ENCODE measurements at regions of chr5 and their contacts with region 1.

Region 1: DNA sequence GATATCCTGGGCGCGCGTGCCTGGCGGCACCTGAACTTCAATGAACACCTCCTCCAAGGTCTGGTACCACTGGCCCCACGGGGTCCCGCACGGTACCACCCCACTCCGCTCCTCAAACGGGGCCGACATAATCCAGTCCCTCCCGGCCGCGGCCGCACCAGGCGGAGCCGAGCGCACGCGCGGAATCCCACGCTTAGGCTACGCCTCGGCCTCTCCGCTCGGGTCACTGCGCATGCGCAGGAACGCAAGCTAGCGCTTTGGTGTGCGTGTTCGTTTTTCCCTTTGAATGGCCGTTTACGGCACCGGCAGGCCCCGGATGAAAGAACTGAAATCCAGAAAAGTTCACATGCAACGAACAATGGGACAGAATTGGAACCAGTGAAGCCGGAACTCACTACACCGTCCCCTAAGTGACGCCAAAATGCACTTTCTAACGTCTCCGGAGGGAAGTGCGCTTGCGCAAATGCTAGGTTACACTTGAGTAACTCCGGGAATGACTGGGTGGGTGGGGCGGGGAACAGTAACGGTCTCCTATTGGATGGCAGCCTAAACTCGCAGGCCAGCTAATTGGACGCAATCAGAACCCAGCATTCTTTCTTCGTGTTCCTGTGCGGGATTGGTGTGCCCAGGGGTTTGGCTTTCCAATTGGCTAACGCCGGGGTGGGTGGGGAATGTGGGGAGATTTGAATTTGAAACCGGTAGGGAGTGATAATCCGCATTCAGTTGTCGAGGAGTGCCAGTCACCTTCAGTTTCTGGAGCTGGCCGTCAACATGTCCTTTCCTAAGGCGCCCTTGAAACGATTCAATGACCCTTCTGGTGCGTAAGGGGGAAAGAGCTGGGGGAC is at the starts of genes HMMR and NUDCD2:
- DNase-seq: peak; percentile 97
- ATAC-seq: peak; percentile 88
- H3K4me3 Mint-ChIP-seq: peak within 1 kb of the TSS; percentile 88
- H3K27ac Mint-ChIP-seq: peak within 1 kb of the TSS; percentile 100
- H3K4me1 Mint-ChIP-seq: peaks cover 34% of the 10 kb centered on the region
- H3K27me3 Mint-ChIP-seq: no peaks in the 10 kb centered on the region
- CTCF ChIP-seq: peak; percentile 14
- total RNA-seq, gene HMMR: 94.2 to 95.2 TPM
- total RNA-seq, gene NUDCD2: 55.5 to 62.7 TPM

Region 2: DNA sequence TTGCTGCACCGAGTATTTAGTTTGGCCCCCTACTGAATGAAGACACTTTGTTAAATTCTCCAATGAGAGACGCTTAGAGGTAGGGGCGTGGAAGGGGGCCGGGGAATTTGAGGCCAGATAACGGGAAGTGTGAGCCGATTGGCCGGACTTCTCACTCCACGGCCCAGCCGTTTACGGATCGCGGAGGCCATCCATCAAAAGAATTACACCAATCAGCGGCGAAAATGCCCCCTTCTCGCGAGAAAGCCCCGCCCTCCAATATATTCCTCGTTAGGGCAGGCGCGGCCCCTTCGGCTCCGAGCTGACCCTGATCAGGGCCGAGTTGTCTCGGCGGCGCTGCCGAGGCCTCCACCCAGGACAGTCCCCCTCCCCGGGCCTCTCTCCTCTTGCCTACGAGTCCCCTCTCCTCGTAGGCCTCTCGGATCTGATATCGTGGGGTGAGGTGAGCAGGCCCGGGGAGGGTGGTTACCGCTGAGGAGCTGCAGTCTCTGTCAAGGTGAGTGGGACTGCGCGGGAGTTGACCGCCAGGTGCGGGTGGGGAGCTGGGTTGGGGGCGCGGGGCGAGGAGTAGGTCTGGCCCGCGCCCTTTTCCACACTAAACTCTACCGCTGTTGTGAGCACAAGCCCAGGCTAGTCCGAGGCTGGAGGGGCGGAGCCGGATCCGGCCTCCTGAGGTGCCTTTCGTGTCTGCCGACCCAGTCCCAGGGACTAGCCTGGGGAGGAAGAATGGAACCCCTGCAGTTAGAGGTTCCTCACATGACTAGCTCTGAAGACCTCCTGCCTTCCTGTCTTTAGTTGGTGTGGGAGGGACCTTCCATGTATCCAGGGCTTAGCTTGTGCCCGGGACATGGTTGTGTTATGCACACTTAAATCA is 22.6 kb before region 1 on chr5 and contains the start of gene CCNG1:
- CTCF ChIA-PET with region 1: interaction called, 25 read pairs
- POLR2A ChIA-PET with region 1: interaction called, 110 read pairs
- intact Hi-C with region 1: loop called (anchors 2 kb)
- DNase-seq: peak; percentile 96
- ATAC-seq: peak; percentile 95
- H3K4me3 Mint-ChIP-seq: peak within 1 kb of the TSS; percentile 84
- H3K27ac Mint-ChIP-seq: peak within 1 kb of the TSS; percentile 93
- H3K4me1 Mint-ChIP-seq: peaks cover 45% of the 10 kb centered on the region
- H3K27me3 Mint-ChIP-seq: no peaks in the 10 kb centered on the region
- CTCF ChIP-seq: no peak
- total RNA-seq, gene CCNG1: 134 to 139 TPM

Region 3: DNA sequence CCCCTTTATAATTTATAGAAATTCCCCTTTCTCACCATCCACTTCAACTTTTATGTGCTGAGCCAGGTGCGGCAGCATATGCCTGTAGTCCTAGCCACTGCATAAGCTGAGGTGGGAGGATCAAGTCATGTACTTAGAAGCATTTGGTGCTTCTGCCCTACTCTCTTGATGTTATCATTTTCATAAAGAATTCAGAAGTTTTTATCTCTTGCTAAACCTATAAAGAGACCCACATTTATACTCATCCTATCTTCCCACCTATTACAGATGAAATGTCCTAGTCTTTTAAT is 18.8 kb after region 1 on chr5:
- CTCF ChIA-PET with region 1: interaction called, 8 read pairs
- POLR2A ChIA-PET with region 1: interaction called, 10 read pairs
- intact Hi-C with region 1: no loop called
- DNase-seq: no peak
- ATAC-seq: no peak
- H3K4me3 Mint-ChIP-seq: no peak overlapping the region
- H3K27ac Mint-ChIP-seq: no peak overlapping the region
- H3K4me1 Mint-ChIP-seq: peaks cover 9% of the 10 kb centered on the region
- H3K27me3 Mint-ChIP-seq: no peaks in the 10 kb centered on the region
- CTCF ChIP-seq: no peak

Region 4: DNA sequence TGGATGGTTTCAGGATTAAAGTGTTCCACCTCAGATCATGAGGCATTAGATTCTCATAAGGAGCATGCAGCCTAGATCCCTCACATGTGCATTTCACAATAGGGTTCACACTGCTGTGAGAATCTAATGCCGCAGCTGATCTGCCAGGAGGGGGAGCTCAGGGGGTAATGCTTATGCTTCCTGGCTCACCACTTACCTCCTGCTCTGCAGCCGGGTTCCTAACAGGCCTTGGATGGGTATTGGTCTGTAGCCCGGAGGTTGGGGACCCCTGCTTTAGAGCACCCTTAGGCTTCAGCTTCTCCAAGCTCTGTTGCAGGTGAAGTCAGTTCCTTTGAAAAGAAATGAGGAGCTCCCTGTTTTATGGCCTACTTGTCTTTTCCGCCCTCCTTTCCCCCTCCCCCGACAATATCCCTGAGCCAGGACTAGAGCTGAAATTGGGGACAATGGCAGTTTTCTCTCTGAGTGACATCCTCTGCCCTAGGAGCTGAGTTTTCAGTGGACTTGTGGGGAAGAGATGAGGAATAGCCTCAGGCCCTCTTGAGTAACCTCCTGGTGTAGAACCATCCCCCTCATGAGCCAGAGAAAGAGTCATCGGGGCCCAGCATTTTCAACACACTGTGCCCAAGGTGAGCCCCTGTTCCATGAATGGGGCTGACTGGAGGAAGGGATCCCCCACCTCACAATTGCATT is 29.1 kb after region 1 on chr5:
- CTCF ChIA-PET with region 1: no interaction called
- POLR2A ChIA-PET with region 1: interaction called, 11 read pairs
- intact Hi-C with region 1: no loop called
- DNase-seq: peak; percentile 18
- ATAC-seq: no peak
- H3K4me3 Mint-ChIP-seq: no peak overlapping the region
- H3K27ac Mint-ChIP-seq: no peak overlapping the region
- H3K4me1 Mint-ChIP-seq: no peaks in the 10 kb centered on the region
- H3K27me3 Mint-ChIP-seq: no peaks in the 10 kb centered on the region
- CTCF ChIP-seq: no peak

Region 5: GRCh38 chr5:163505368-163506094 is 45.4 kb after region 1 on chr5 and contains the start of gene MAT2B:
- CTCF ChIA-PET with region 1: interaction called, 24 read pairs
- POLR2A ChIA-PET with region 1: interaction called, 168 read pairs
- intact Hi-C with region 1: loop called (anchors 1 kb)
- DNase-seq: peak; percentile 96
- ATAC-seq: peak; percentile 86
- H3K4me3 Mint-ChIP-seq: peak within 1 kb of the TSS; percentile 99
- H3K27ac Mint-ChIP-seq: peak within 1 kb of the TSS; percentile 99
- H3K4me1 Mint-ChIP-seq: peaks cover 37% of the 10 kb centered on the region
- H3K27me3 Mint-ChIP-seq: no peaks in the 10 kb centered on the region
- CTCF ChIP-seq: peak; percentile 52
- total RNA-seq, gene MAT2B: 71.5 to 71.6 TPM